ENCODE measurements at regions of chr3 and their contacts with region 1.

Region 1: DNA sequence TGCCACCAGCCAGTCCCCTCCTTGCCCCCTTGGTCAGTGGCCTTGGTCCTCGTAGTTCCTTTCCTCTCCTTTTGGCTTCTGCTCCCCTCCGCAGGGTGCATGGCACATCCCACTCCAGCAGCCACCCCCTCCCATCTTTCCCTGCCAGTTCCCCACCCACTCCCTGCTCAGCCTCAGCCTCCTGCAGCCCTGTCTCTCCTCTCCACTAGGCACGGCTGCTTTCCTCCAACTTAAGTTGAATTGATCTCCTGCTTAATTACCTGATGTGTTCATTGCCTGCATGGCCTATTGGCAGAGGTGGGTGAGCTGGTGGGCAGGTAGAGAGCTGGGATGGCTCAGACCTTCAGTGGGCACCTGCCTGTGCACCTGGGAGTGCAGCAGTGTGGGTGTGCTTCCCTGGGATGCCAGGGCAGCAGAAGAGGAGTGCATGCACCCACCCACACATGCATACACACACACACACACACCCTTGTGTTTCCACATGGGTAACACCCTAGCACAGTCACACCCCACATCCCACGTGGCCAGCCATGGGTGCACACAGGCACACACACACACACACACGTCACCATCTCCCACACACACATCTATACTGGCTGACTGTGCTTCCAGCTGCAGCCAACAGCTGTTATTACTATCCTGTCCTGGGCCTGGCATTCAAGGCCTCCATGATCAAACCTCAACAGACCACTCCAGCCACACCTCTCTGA is 30.9 kb downstream of the C3orf18 start:
- DNase-seq: no peak
- H3K4me3 ChIP-seq: no peak overlapping the region
- H3K27ac ChIP-seq: no peak overlapping the region
- H3K4me1 ChIP-seq: peaks cover 6 to 18% (median 12%) of the 10 kb centered on the region in 4 experiments
- H3K27me3 ChIP-seq: peaks cover 0 to 4% (median 2%) of the 10 kb centered on the region in 4 experiments; a peak in 2 of 7 replicates
- CTCF ChIP-seq: no peak
- EP300 ChIP-seq: no peak
- POLR2A ChIP-seq: no peak
- RAD21 ChIP-seq: no peak

Region 2: DNA sequence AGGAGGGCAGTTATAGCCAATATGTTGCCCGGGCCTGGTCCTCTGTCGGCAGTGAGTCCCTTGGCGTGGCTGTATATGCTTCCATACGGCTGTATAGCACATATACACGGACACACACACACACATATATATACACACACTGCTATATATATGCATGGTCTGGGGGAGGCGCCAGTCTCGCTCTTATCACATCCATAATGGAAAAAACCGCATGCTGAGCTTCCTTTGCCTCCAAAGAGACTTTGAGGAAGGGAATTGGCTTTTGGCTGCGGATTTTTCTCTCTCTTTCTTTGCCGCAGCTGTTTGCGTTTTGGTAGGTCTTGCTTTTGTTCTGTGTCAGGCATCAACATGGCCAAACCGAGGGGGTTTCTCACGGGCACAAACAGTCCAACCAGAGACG is 166.0 kb before region 1 on chr3:
- CTCF ChIA-PET with region 1: interaction called, 15 read pairs
- POLR2A ChIA-PET with region 1: interaction called, 3 read pairs
- DNase-seq: no peak
- H3K4me3 ChIP-seq: no peak overlapping the region
- H3K27ac ChIP-seq: no peak overlapping the region
- H3K4me1 ChIP-seq: peaks cover 0 to 32% (median 23%) of the 10 kb centered on the region in 4 experiments; a peak in 6 of 7 replicates
- H3K27me3 ChIP-seq: no peaks in the 10 kb centered on the region; a peak in 2 of 7 replicates
- CTCF ChIP-seq: peak in 1 of 3 experiments; percentile 34; a peak in 1 of 4 replicates
- EP300 ChIP-seq: no peak
- POLR2A ChIP-seq: no peak
- RAD21 ChIP-seq: peak; percentile 41 to 44; a peak in 3 of 4 replicates

Region 3: GRCh38 chr3:50503504-50504342 is 32.9 kb before region 1 on chr3 and contains the start of gene CACNA2D2:
- CTCF ChIA-PET with region 1: interaction called, 68 read pairs
- POLR2A ChIA-PET with region 1: interaction called, 4 read pairs
- DNase-seq: peak in 1 of 2 experiments; percentile 82
- H3K4me3 ChIP-seq: peak within 1 kb of the TSS; percentile 47 to 94 (median 64)
- H3K27ac ChIP-seq: no peak within 1 kb of the TSS
- H3K4me1 ChIP-seq: peaks cover 0 to 15% (median 11%) of the 10 kb centered on the region in 4 experiments; a peak in 6 of 7 replicates
- H3K27me3 ChIP-seq: peaks cover 4 to 42% (median 27%) of the 10 kb centered on the region in 4 experiments
- CTCF ChIP-seq: 0 out of 4 replicates have a peak, but pooled peaks of 1 of the 3 experiments have one; percentile 4
- EP300 ChIP-seq: no peak
- POLR2A ChIP-seq: peak in 1 of 2 experiments; percentile 87; a peak in 2 of 3 replicates
- RAD21 ChIP-seq: peak in 1 of 2 experiments; percentile 19; a peak in 1 of 4 replicates
- total RNA-seq, gene CACNA2D2: 14.0 and 14.1 TPM in 2 replicates

Region 4: DNA sequence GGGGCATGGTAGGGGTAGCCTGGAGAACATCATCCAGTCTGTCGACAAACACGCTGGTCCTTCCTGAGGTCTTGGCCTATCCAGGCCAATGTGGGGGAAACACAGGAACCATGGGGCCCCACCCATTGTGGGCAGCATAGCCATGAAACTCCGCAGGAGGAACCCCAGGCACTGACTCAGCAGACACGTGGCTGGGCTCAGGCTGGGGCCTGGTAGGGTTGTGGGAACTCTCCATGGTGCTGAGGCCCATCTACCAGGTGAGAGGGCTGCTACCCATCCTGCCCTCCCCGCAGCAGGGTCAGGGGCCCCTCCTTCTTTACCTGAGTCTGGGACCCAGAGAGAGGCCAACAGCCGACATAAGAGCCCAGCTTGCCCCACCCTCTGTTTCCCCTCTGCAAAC is 10.6 kb before region 1 on chr3:
- CTCF ChIA-PET with region 1: interaction called, 129 read pairs
- POLR2A ChIA-PET with region 1: interaction called, 6 read pairs
- DNase-seq: peak in 1 of 2 experiments; percentile 87
- H3K4me3 ChIP-seq: no peak overlapping the region
- H3K27ac ChIP-seq: no peak overlapping the region
- H3K4me1 ChIP-seq: peaks cover 3 to 37% (median 21%) of the 10 kb centered on the region in 4 experiments
- H3K27me3 ChIP-seq: peaks cover 0 to 9% (median 5%) of the 10 kb centered on the region in 4 experiments; a peak in 5 of 7 replicates
- CTCF ChIP-seq: no peak
- EP300 ChIP-seq: no peak
- POLR2A ChIP-seq: no peak
- RAD21 ChIP-seq: 0 out of 4 replicates have a peak, but pooled peaks of 1 of the 2 experiments have one; percentile 8

Region 5: DNA sequence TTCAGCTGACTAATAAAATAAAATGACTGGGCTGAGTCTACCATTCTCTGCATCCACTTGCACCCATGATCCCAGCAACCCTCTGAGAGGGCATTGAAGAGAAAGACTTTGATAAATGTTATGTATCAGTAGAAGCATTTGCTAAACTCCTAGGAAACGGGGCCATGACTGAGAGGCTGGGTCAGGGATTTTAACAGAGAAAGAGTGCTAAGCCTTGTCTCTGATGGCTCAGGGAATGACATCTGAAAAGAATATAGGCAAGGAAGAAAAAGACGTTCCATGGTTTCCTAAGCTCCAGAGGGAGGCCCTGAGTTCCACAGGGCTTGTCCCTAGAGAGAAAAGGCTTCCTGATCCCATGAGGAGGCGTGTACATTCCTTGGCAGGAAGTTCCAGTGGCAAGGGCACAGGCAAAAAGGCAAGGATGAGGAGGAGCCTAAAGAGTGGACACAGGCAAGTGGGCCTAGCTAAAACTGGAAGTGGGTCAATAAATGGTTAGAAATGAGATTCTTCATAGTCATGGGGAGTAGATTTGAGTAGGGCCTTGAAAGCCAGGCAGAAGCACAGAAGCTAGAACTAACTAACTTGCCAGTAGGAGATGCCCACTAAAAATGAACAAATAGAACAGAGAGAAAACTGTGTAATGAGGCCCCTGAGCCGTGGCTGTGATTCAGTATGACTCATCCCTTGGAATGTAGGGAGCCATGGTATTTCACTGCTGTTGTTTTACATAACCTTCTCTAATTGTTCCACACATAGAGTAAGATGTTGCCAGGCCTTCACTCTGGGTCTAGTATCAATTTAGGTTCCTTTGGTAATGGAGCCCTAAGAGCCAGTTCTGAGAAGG is 803.6 kb after region 1 on chr3:
- CTCF ChIA-PET with region 1: no interaction called
- POLR2A ChIA-PET with region 1: no interaction called
- DNase-seq: peak in 1 of 2 experiments; percentile 33
- H3K4me3 ChIP-seq: no peak overlapping the region
- H3K27ac ChIP-seq: no peak overlapping the region
- H3K4me1 ChIP-seq: peaks cover 2 to 5% (median 3%) of the 10 kb centered on the region in 4 experiments; a peak in 5 of 7 replicates
- H3K27me3 ChIP-seq: no peaks in the 10 kb centered on the region
- CTCF ChIP-seq: no peak
- EP300 ChIP-seq: no peak
- POLR2A ChIP-seq: no peak
- RAD21 ChIP-seq: no peak